Activated CD8-positive, alpha-beta T cell treated with anti-CD3 and anti-CD28 coated beads for 36 hours (primary cell): ENCODE measurements at regions of chr5 and their contacts with region 1.

Region 1: GRCh38 chr5:140547508-140548299 is at the start of gene EIF4EBP3:
- DNase-seq: peak; percentile 94
- ATAC-seq: peak; percentile 97
- H3K4me3 Mint-ChIP-seq: peak within 1 kb of the TSS; percentile 89
- H3K27ac Mint-ChIP-seq: peak within 1 kb of the TSS; percentile 98
- H3K4me1 Mint-ChIP-seq: peaks cover 41% of the 10 kb centered on the region
- H3K27me3 Mint-ChIP-seq: no peaks in the 10 kb centered on the region
- CTCF ChIP-seq: peak; percentile 84
- total RNA-seq, gene EIF4EBP3: 19.6 to 20.3 TPM

Region 2: DNA sequence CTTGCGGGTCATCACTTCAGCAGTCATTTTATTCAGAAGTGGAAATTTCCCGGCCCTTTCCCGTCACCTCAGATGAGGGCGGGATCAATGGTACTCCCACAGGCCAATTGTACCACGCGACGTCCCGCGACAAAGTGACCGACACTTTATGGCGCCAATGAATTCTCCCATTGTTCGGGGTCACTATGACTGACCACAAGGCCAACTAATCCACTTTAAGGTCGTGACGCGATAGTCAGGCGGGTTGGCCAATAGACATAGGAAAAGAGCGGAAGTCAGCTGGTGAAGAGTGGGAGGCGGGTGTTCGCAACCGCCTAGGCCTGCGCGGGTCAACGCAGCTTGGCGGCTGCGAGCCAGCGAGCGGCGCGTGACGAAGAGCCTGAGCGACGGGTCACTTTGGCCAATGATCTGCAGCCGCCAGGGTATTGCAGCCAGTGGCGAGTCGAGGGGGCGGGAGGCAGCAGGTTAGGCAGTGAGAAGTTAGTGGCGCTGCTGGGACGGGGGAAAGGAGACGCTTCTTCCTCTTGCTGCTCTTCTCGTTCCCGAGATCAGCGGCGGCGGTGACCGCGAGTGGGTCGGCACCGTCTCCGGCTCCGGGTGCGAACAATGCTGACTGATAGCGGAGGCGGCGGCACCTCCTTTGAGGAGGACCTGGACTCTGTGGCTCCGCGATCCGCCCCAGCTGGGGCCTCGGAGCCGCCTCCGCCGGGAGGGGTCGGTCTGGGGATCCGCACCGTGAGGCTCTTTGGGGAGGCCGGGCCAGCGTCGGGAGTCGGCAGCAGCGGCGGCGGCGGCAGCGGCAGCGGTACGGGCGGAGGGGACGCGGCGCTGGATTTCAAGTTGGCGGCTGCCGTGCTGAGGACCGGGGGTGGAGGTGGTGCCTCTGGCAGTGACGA is 146.1 kb before region 1 on chr5 and contains the start of gene ANKHD1:
- CTCF ChIA-PET with region 1: no interaction called
- POLR2A ChIA-PET with region 1: interaction called, 12 read pairs
- intact Hi-C with region 1: no loop called
- DNase-seq: peak; percentile 99
- ATAC-seq: peak; percentile 83
- H3K4me3 Mint-ChIP-seq: no peak within 1 kb of the TSS
- H3K27ac Mint-ChIP-seq: no peak within 1 kb of the TSS
- H3K4me1 Mint-ChIP-seq: peaks cover 30% of the 10 kb centered on the region
- H3K27me3 Mint-ChIP-seq: no peaks in the 10 kb centered on the region
- CTCF ChIP-seq: no peak
- total RNA-seq, gene ANKHD1: 99.3 to 103 TPM

Region 3: GRCh38 chr5:140564196-140565023 is 16.7 kb after region 1 on chr5 and contains the starts of genes APBB3 and SLC35A4:
- CTCF ChIA-PET with region 1: interaction called, 8 read pairs
- POLR2A ChIA-PET with region 1: interaction called, 38 read pairs
- intact Hi-C with region 1: no loop called
- DNase-seq: peak; percentile 97
- ATAC-seq: peak; percentile 95
- H3K4me3 Mint-ChIP-seq: peak within 1 kb of the TSS; percentile 88
- H3K27ac Mint-ChIP-seq: peak within 1 kb of the TSS; percentile 90
- H3K4me1 Mint-ChIP-seq: peaks cover 54% of the 10 kb centered on the region
- H3K27me3 Mint-ChIP-seq: no peaks in the 10 kb centered on the region
- CTCF ChIP-seq: no peak
- total RNA-seq, gene APBB3: 24.9 TPM
- total RNA-seq, gene SLC35A4: 72.9 to 73.6 TPM

Region 4: DNA sequence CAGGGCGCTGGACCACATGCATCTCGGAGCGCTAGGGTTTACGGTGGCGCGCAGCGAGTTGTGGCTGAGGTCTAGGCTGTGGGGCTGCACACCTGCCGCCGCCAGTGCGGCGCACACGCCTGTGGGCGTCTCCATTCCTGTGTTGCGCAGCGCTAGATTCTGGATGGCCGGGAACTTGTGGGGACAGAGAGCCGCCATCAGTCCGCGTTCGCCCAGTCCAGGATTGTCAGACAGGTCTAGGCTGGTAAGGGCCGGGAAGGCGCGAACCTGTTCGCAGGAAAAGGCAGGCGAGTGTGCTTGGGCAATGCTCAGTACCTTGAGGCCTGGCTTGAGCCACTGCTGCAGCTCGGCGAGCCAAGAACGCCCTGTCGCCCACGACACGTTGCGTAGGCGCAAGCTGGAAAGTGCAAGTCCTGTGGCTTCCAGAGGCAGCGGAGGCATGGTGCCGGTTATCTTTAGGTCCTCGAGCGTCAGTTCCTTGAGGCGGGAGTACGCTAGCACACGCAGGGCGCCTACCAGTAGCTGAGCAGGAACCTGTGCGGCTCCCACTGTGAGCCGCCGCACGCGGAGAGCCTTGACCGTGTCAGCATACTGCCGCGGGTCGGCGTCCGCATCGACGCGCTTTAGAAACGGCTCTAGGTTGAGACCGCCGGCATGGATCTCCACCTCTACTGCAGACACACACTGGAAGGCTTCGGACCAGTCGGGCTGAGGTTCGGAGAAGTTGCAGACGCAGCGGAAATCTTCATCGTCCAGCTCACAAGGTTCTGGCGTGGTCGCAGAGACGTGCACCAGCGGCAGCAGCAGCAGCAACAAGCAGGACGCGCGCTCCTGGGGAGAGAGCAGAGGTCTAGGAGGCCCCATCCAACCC is 84.7 kb after region 1 on chr5:
- CTCF ChIA-PET with region 1: interaction called, 16 read pairs
- POLR2A ChIA-PET with region 1: interaction called, 9 read pairs
- intact Hi-C with region 1: loop called (anchors 5 kb)
- DNase-seq: peak; percentile 68
- ATAC-seq: peak; percentile 65
- H3K4me3 Mint-ChIP-seq: peak overlapping the region; percentile 74
- H3K27ac Mint-ChIP-seq: peak overlapping the region; percentile 71
- H3K4me1 Mint-ChIP-seq: peaks cover 28% of the 10 kb centered on the region
- H3K27me3 Mint-ChIP-seq: peaks cover 17% of the 10 kb centered on the region
- CTCF ChIP-seq: no peak

Region 5: GRCh38 chr5:140639148-140639979 is 91.7 kb after region 1 on chr5 and contains the start of gene TMCO6:
- CTCF ChIA-PET with region 1: interaction called, 16 read pairs
- POLR2A ChIA-PET with region 1: interaction called, 10 read pairs
- intact Hi-C with region 1: loop called (anchors 5 kb)
- DNase-seq: peak; percentile 98
- ATAC-seq: peak; percentile 97
- H3K4me3 Mint-ChIP-seq: peak within 1 kb of the TSS; percentile 78
- H3K27ac Mint-ChIP-seq: peak within 1 kb of the TSS; percentile 86
- H3K4me1 Mint-ChIP-seq: peaks cover 42% of the 10 kb centered on the region
- H3K27me3 Mint-ChIP-seq: no peaks in the 10 kb centered on the region
- CTCF ChIP-seq: peak; percentile 72
- total RNA-seq, gene TMCO6: 31.7 to 33.2 TPM

Region 6: GRCh38 chr5:140862441-140863295 is 315.0 kb after region 1 on chr5:
- CTCF ChIA-PET with region 1: no interaction called
- POLR2A ChIA-PET with region 1: no interaction called
- intact Hi-C with region 1: no loop called
- DNase-seq: no peak
- ATAC-seq: no peak
- H3K4me3 Mint-ChIP-seq: no peak overlapping the region
- H3K27ac Mint-ChIP-seq: no peak overlapping the region
- H3K4me1 Mint-ChIP-seq: no peaks in the 10 kb centered on the region
- H3K27me3 Mint-ChIP-seq: peaks cover 14% of the 10 kb centered on the region
- CTCF ChIP-seq: no peak